Upper lobe of right lung (tissue), 1 donor: ENCODE measurements at regions of chr3 and their contacts with region 1.

Region 1: DNA sequence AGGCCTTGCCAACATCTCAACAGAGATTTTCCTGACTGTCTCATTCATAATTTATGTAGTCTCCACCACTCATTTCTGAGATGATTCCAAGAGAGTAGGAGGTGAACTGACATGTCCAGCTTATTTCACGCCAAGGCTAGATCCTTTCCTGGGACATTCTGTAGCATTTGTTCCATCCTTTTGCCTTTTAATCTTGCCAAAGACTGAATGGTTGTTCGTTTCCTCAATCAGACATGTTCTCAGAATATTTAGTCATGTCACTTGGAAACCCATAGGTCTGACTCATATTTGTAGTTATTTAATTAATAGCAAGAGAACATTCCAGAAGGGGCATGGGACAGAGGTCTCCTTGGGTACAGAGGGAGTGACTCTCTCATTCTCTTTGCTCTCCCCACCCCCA is 80.9 kb downstream of the DHX36 start:
- DNase-seq: no peak
- ATAC-seq: peak; percentile 45
- H3K4me3 ChIP-seq: no peak overlapping the region
- H3K27ac ChIP-seq: peak overlapping the region; percentile 4
- H3K4me1 ChIP-seq: no peaks in the 10 kb centered on the region
- H3K27me3 ChIP-seq: no peaks in the 10 kb centered on the region
- CTCF ChIP-seq: no peak

Region 2: DNA sequence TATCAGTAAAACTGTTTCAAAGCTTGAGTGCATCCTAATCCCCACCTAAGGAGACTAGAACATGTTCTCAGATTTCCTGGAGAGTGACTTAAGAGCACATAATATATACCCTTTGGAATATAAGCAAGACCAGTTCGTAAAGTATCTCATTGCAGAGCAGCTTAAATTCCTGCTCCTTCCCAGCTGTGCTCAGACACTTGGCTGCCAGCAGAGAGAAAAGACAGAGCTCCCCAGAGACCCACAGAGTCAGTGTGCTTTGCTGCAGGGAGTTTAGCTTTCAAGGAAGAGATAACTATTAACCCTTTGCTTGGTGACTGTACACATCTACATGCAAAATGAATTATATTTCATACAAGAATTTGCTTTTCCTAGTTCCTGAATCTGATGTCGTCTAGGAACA is 460.2 kb before region 1 on chr3:
- intact Hi-C with region 1: no loop called
- DNase-seq: no peak
- ATAC-seq: no peak
- H3K4me3 ChIP-seq: no peak overlapping the region
- H3K27ac ChIP-seq: no peak overlapping the region
- H3K4me1 ChIP-seq: no peaks in the 10 kb centered on the region
- H3K27me3 ChIP-seq: no peaks in the 10 kb centered on the region
- CTCF ChIP-seq: no peak

Region 3: DNA sequence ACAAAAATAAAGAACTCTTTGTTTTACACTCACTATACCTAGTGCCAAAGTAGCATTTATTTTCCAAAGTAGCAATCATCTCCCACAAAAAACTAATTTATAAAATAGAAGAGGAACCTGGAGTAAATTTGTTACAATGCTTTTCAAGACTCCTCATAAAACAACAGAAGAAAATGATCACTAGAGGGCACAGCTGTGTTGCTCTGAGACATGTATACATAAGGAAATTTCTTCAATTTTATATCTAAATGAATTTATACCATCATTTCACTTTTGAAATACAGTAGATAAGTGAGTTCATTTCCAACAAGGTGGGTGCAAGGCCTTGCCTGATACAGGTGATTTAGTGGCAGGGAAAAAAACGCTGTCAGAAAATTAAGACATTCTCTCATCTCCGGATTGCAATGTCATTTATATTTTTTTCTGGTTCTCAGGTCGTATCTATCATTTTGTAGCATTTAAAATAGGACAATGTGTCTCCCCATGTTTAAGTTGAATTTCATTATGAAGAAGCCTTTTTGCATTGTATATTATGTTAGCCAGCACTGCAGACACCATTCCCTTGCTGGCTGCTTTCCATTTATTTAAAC is 147.4 kb before region 1 on chr3:
- intact Hi-C with region 1: loop called (anchors 10 kb)
- DNase-seq: no peak
- ATAC-seq: no peak
- H3K4me3 ChIP-seq: no peak overlapping the region
- H3K27ac ChIP-seq: no peak overlapping the region
- H3K4me1 ChIP-seq: no peaks in the 10 kb centered on the region
- H3K27me3 ChIP-seq: no peaks in the 10 kb centered on the region
- CTCF ChIP-seq: peak; percentile 48